ENCODE measurements at regions of chr17 and their contacts with region 1.

Region 1: GRCh38 chr17:75877752-75878173 is 618 bp downstream of the TRIM47 start:
- DNase-seq: peak; percentile 74
- H3K4me3 Mint-ChIP-seq: peak overlapping the region; percentile 93
- H3K27ac Mint-ChIP-seq: peak overlapping the region; percentile 83
- H3K4me1 Mint-ChIP-seq: peaks cover 32% of the 10 kb centered on the region
- H3K27me3 Mint-ChIP-seq: peaks cover 3% of the 10 kb centered on the region

Region 2: DNA sequence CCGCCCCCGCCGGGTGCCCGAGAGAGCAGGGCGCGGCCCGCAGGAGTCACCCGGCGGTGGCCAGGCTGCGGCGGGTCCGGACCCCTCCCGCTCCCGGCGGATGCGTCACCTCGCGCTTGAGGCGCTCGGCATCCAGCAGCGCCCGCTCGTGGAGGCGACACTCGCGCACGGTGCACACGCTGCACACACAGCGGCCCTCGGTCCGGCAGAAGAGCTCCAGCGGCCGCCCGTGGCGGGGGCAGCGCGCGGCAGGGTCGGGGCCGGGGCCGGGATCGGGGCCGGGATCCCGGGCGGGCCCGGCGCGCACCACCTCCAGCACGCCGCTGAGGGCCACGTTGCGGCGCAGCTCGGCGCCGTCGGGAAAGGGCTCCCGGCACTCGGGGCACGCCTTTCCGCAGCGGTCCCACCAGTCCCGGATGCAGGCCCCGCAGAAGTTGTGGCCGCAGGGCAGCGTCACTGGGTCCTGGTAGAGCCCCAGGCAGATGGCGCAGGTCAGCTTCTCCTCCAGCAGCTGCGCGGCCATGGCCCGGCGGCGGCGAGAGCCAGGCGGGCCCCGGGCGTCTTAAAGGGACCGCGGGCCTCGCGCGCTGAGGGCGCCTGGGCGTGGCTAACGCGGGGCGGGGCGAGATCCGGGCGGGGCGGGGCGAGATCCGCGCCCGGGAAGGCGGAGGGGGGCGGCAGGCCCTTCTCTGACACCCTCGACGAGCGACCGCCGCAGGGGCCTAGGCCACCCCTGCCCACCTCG is 18.8 kb after region 1 on chr17 and contains the start of gene TRIM65:
- CTCF ChIA-PET with region 1: interaction called, 7 read pairs
- intact Hi-C with region 1: loop called (anchors 1 kb)
- DNase-seq: peak; percentile 83
- H3K4me3 Mint-ChIP-seq: peak within 1 kb of the TSS; percentile 79
- H3K27ac Mint-ChIP-seq: peak within 1 kb of the TSS; percentile 59
- H3K4me1 Mint-ChIP-seq: peaks cover 28% of the 10 kb centered on the region
- H3K27me3 Mint-ChIP-seq: no peaks in the 10 kb centered on the region
- total RNA-seq, gene TRIM65: 24.5 to 25.5 TPM

Measured in activated naive CD4-positive, alpha-beta T cell treated with anti-CD3 and anti-CD28 coated beads for 36 hours (primary cell).